HepG2 (cell line): ENCODE measurements at regions of chr1 and their contacts with region 1.

Region 1: GRCh38 chr1:156212833-156213643 is at the start of gene PMF1:
- DNase-seq: peak; percentile 92
- ATAC-seq: peak; percentile 98
- H3K4me3 ChIP-seq: peak within 1 kb of the TSS; percentile 75 to 88 (median 82)
- H3K27ac ChIP-seq: peak within 1 kb of the TSS; percentile 99
- H3K4me1 ChIP-seq: peaks cover 36% of the 10 kb centered on the region
- H3K27me3 ChIP-seq: no peaks in the 10 kb centered on the region; a peak in 1 of 5 replicates
- CTCF ChIP-seq: no peak
- EP300 ChIP-seq: no peak
- POLR2A ChIP-seq: peak; percentile 82 to 92
- RAD21 ChIP-seq: no peak; the same call in 1 of the 2 replicates
- total RNA-seq, gene PMF1: 89.0 and 94.7 TPM in 2 replicates

Region 2: DNA sequence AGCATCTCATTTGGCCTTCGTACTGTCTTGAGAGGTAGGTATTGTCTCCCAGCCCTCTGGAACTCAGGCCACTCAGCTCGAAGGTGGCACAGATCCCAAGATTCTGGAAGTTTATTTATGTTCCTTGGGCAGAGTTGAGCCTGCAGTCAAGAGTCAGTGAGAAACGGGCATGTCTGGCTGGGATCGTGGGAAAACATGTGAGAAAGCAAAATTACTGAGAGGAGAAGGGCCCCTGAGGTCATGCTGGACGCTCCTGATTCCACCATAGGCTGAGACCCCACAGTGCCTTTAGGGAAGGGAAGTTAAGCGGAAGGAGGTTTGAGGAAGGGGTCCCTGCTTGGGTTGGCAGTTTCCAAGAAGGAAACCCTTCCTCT is 72.2 kb before region 1 on chr1:
- CTCF ChIA-PET with region 1: no interaction called
- POLR2A ChIA-PET with region 1: interaction called, 37 read pairs
- in situ Hi-C with region 1: no loop called
- intact Hi-C with region 1: no loop called
- DNase-seq: no peak
- ATAC-seq: peak; percentile 10
- H3K4me3 ChIP-seq: no peak overlapping the region
- H3K27ac ChIP-seq: no peak overlapping the region
- H3K4me1 ChIP-seq: peaks cover 23% of the 10 kb centered on the region
- H3K27me3 ChIP-seq: no peaks in the 10 kb centered on the region
- CTCF ChIP-seq: no peak
- EP300 ChIP-seq: no peak
- POLR2A ChIP-seq: no peak
- RAD21 ChIP-seq: no peak

Region 3: DNA sequence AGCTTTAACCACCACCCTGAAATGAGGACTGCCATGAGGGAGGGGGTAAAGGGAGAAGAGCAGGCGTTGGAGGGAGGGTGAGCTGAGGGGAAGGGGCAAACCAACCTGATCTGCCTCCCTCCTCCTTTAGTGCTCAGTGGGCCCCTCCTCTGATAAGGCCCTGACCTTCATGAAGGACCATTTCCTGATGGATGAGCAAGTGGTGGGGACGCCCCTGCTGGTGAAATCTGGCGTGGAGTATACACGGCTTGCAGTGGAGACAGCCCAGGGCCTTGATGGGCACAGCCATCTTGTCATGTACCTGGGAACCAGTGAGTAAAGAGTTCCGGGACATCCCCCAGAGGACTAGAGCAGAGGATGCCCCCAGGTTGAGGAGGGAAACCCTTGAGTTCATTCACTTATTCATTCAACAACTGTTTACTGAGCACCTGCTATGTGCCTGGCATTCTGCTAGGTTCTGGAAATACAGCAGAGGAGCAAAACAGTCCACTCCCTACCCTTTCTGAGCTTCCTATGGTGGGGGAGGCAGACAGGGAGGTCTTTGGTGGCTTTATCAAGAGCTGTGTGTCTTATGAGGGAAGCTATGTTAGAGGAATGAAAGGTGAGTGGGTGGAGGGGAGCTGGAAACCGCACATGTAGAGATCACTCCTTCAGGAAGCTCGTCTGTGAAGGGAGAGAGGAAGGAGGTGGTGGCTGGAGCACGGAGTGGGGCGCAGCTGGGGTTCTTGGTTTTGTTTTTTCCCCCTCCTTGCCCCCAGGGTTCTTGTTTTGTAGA is 40.2 kb before region 1 on chr1:
- CTCF ChIA-PET with region 1: no interaction called
- POLR2A ChIA-PET with region 1: interaction called, 19 read pairs
- in situ Hi-C with region 1: no loop called
- intact Hi-C with region 1: no loop called
- DNase-seq: peak; percentile 28
- ATAC-seq: peak; percentile 78
- H3K4me3 ChIP-seq: peak overlapping the region in 1 of 3 experiments; percentile 32; a peak in 1 of 6 replicates
- H3K27ac ChIP-seq: no peak overlapping the region
- H3K4me1 ChIP-seq: peaks cover 59% of the 10 kb centered on the region
- H3K27me3 ChIP-seq: no peaks in the 10 kb centered on the region
- CTCF ChIP-seq: 0 out of 2 replicates have a peak, but pooled peaks have one; percentile 33
- EP300 ChIP-seq: no peak
- POLR2A ChIP-seq: no peak
- RAD21 ChIP-seq: no peak

Region 4: GRCh38 chr1:156193488-156194299 is 19.3 kb before region 1 on chr1 and contains the start of gene SLC25A44:
- CTCF ChIA-PET with region 1: interaction called, 3 read pairs
- POLR2A ChIA-PET with region 1: interaction called, 32 read pairs
- in situ Hi-C with region 1: no loop called
- intact Hi-C with region 1: no loop called
- DNase-seq: peak; percentile 96
- ATAC-seq: peak; percentile 97
- H3K4me3 ChIP-seq: peak within 1 kb of the TSS; percentile 81 to 97 (median 97)
- H3K27ac ChIP-seq: peak within 1 kb of the TSS; percentile 61
- H3K4me1 ChIP-seq: peaks cover 83% of the 10 kb centered on the region
- H3K27me3 ChIP-seq: no peaks in the 10 kb centered on the region; a peak in 2 of 5 replicates
- CTCF ChIP-seq: peak; percentile 73
- EP300 ChIP-seq: 0 out of 4 replicates have a peak, but pooled peaks of 1 of the 2 experiments have one; percentile 14
- POLR2A ChIP-seq: peak; percentile 64 to 68
- RAD21 ChIP-seq: peak; percentile 31; the same call in 1 of the 2 replicates
- total RNA-seq, gene SLC25A44: 10.7 and 12.4 TPM in 2 replicates

Region 5: DNA sequence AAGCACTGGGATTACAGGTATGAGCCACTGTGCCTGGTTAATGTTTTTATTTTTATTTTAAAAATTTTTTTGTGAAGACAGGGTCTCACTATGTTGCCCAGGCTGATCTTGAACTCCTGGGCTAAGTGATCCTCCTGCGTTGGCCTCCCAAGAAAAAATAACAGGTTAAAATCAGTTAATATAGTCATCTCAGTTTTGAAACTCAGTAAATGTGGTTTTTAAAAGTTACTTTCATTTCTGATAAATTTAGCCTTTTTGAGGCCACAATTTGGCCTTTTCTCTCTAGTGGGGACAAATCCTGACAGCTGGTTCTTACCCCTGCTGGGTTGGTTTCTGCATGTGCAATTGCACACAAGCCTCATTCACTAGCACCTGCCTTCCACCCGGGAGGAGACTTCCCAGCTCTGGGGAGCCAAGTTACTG is 13.1 kb after region 1 on chr1:
- CTCF ChIA-PET with region 1: no interaction called
- POLR2A ChIA-PET with region 1: interaction called, 61 read pairs
- in situ Hi-C with region 1: no loop called
- intact Hi-C with region 1: no loop called
- DNase-seq: no peak
- ATAC-seq: no peak
- H3K4me3 ChIP-seq: no peak overlapping the region
- H3K27ac ChIP-seq: no peak overlapping the region
- H3K4me1 ChIP-seq: peaks cover 17% of the 10 kb centered on the region
- H3K27me3 ChIP-seq: no peaks in the 10 kb centered on the region
- CTCF ChIP-seq: no peak
- EP300 ChIP-seq: no peak
- POLR2A ChIP-seq: no peak
- RAD21 ChIP-seq: no peak

Region 6: GRCh38 chr1:156705918-156706656 is 493.0 kb after region 1 on chr1:
- CTCF ChIA-PET with region 1: no interaction called
- POLR2A ChIA-PET with region 1: no interaction called
- in situ Hi-C with region 1: no loop called
- intact Hi-C with region 1: no loop called
- DNase-seq: peak; percentile 23
- ATAC-seq: peak; percentile 53
- H3K4me3 ChIP-seq: peak overlapping the region; percentile 41 to 66 (median 52)
- H3K27ac ChIP-seq: no peak overlapping the region
- H3K4me1 ChIP-seq: peaks cover 25% of the 10 kb centered on the region
- H3K27me3 ChIP-seq: peaks cover 11 to 79% of the 10 kb centered on the region in 2 experiments
- CTCF ChIP-seq: peak; percentile 73
- EP300 ChIP-seq: no peak
- POLR2A ChIP-seq: no peak
- RAD21 ChIP-seq: peak; percentile 44